Dendritic cell treated with granulocyte-macrophage colony-stimulating factor and Interleukin-4, amounts not matched to agents 40 ng/mL and 50 ng/mL, for 4 days (primary cell): ENCODE measurements at regions of chr11 and their contacts with region 1.

Region 1: GRCh38 chr11:21511835-21512440 is 680.9 kb upstream of the ANO5 start:
- H3K4me3 Mint-ChIP-seq: no peak overlapping the region
- H3K27ac Mint-ChIP-seq: no peak overlapping the region
- H3K4me1 Mint-ChIP-seq: no peaks in the 10 kb centered on the region
- H3K27me3 Mint-ChIP-seq: no peaks in the 10 kb centered on the region

Region 2: GRCh38 chr11:20647976-20648565 is 863.9 kb before region 1 on chr11:
- intact Hi-C with region 1: loop called (anchors 1 kb)
- H3K4me3 Mint-ChIP-seq: no peak overlapping the region
- H3K27ac Mint-ChIP-seq: no peak overlapping the region
- H3K4me1 Mint-ChIP-seq: no peaks in the 10 kb centered on the region
- H3K27me3 Mint-ChIP-seq: no peaks in the 10 kb centered on the region

Region 3: DNA sequence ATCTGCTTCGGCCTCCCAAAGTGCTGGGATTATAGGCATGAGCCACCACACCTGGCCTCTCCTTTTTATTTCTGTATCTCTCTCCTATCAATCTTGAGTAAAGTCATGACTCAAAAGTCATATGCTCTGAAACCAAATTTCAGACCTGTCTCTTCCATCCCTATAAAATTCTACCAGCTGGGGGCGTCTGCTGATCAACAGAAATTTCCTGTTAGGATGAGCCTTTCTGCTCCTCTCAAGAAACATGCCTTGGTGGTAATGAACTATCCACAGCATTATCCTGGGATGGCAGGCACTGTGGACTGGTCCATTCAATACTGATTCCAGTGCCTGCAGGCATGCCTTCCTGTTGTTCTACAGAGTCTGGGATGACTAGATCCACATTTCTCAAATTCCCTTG is 369.9 kb before region 1 on chr11:
- intact Hi-C with region 1: loop called (anchors 5 kb)
- H3K4me3 Mint-ChIP-seq: no peak overlapping the region
- H3K27ac Mint-ChIP-seq: no peak overlapping the region
- H3K4me1 Mint-ChIP-seq: no peaks in the 10 kb centered on the region
- H3K27me3 Mint-ChIP-seq: no peaks in the 10 kb centered on the region